B cell (primary cell): ENCODE measurements at regions of chr6 and their contacts with region 1.

Region 1: GRCh38 chr6:143450453-143451371 is at the starts of genes ADAT2 and PEX3:
- DNase-seq: peak; percentile 96
- ATAC-seq: peak; percentile 95
- H3K4me3 ChIP-seq: peak within 1 kb of the TSS; percentile 69 to 95 (median 87)
- H3K4me3 Mint-ChIP-seq: peak within 1 kb of the TSS; percentile 95
- H3K27ac ChIP-seq: peak within 1 kb of the TSS; percentile 59 to 82
- H3K27ac Mint-ChIP-seq: peak within 1 kb of the TSS; percentile 94
- H3K4me1 ChIP-seq: peaks cover 15 to 18% of the 10 kb centered on the region in 2 donors
- H3K4me1 Mint-ChIP-seq: peaks cover 33% of the 10 kb centered on the region
- H3K27me3 ChIP-seq: no peaks in the 10 kb centered on the region
- H3K27me3 Mint-ChIP-seq: no peaks in the 10 kb centered on the region
- CTCF ChIP-seq: no peak
- total RNA-seq, gene ADAT2: 15.2 and 16.0 TPM in 2 replicates
- total RNA-seq, gene PEX3: 23.2 and 31.1 TPM in 2 replicates

Region 2: GRCh38 chr6:142850679-142851423 is 599.9 kb before region 1 on chr6:
- CTCF ChIA-PET with region 1: no interaction called
- POLR2A ChIA-PET with region 1: no interaction called
- intact Hi-C with region 1: loop called (anchors 10 kb)
- DNase-seq: no peak
- ATAC-seq: no peak
- H3K4me3 ChIP-seq: no peak overlapping the region
- H3K4me3 Mint-ChIP-seq: peak overlapping the region; percentile 39
- H3K27ac ChIP-seq: no peak overlapping the region
- H3K27ac Mint-ChIP-seq: peak overlapping the region; percentile 38
- H3K4me1 ChIP-seq: peaks cover 70 to 81% of the 10 kb centered on the region in 2 donors
- H3K4me1 Mint-ChIP-seq: peaks cover 91% of the 10 kb centered on the region
- H3K27me3 ChIP-seq: no peaks in the 10 kb centered on the region
- H3K27me3 Mint-ChIP-seq: no peaks in the 10 kb centered on the region
- CTCF ChIP-seq: no peak

Region 3: GRCh38 chr6:143465546-143465945 is 14.8 kb after region 1 on chr6:
- CTCF ChIA-PET with region 1: no interaction called
- POLR2A ChIA-PET with region 1: no interaction called
- intact Hi-C with region 1: no loop called
- DNase-seq: no peak
- ATAC-seq: no peak
- H3K4me3 ChIP-seq: no peak overlapping the region
- H3K4me3 Mint-ChIP-seq: no peak overlapping the region
- H3K27ac ChIP-seq: no peak overlapping the region
- H3K27ac Mint-ChIP-seq: no peak overlapping the region
- H3K4me1 ChIP-seq: no peaks in the 10 kb centered on the region
- H3K4me1 Mint-ChIP-seq: no peaks in the 10 kb centered on the region
- H3K27me3 ChIP-seq: no peaks in the 10 kb centered on the region
- H3K27me3 Mint-ChIP-seq: no peaks in the 10 kb centered on the region
- CTCF ChIP-seq: no peak

Region 4: DNA sequence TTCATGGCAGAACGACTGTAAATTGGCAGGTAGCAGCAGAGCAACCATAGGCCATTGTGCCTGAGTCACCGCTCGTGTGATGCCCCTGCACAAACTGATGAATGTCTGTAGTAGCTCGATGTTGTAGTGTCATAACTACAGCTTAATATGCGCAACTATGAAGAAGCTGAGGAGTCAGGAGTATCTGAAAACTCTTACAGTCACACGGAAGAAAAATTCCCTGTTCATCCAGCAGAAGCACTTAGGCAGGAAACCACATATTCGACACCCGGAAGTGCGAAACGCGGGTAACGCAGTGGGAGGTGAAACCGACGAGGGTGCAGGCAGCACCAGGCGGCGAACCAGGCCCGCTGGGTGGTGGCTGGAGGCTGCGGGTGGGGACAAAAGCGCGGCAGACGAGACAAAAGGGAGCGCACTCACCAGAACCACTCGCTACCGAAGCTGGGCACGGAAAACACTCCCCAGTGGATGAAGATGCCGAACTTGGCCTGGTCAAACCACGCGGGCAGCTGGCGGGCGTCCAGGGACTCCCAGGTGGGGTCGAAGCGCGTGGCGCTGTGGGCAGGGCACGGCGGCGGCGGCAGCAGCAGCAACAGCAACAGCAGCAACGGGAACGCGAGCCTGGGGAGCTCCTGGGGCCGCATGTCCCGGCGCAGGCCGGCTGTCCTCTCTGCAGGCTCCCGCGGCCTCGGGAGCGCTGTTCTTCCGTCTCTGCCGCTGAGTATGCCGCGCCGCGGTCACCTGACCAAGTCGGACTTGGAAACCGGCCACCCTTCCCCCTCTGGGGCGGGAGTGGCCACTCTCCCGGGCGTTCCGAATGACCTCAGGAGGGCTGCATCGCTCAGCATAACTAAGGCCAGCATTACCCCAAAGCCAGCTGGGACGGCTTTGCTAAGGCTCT is 60.5 kb after region 1 on chr6 and contains the start of gene FUCA2:
- CTCF ChIA-PET with region 1: interaction called, 4 read pairs
- POLR2A ChIA-PET with region 1: interaction called, 4 read pairs
- intact Hi-C with region 1: loop called (anchors 1 kb)
- DNase-seq: peak; percentile 69
- ATAC-seq: peak; percentile 65
- H3K4me3 ChIP-seq: peak within 1 kb of the TSS; percentile 46 to 74 (median 64)
- H3K4me3 Mint-ChIP-seq: peak within 1 kb of the TSS; percentile 98
- H3K27ac ChIP-seq: peak within 1 kb of the TSS; percentile 47 to 72
- H3K27ac Mint-ChIP-seq: peak within 1 kb of the TSS; percentile 95
- H3K4me1 ChIP-seq: peaks cover 15 to 19% of the 10 kb centered on the region in 2 donors
- H3K4me1 Mint-ChIP-seq: peaks cover 33% of the 10 kb centered on the region
- H3K27me3 ChIP-seq: no peaks in the 10 kb centered on the region
- H3K27me3 Mint-ChIP-seq: no peaks in the 10 kb centered on the region
- CTCF ChIP-seq: no peak
- total RNA-seq, gene FUCA2: 8.3 and 8.8 TPM in 2 replicates

Region 5: GRCh38 chr6:144063744-144064401 is 613.2 kb after region 1 on chr6:
- CTCF ChIA-PET with region 1: no interaction called
- POLR2A ChIA-PET with region 1: no interaction called
- intact Hi-C with region 1: loop called (anchors 1 kb)
- DNase-seq: peak; percentile 97
- ATAC-seq: peak; percentile 91
- H3K4me3 ChIP-seq: peak overlapping the region; percentile 74 to 86 (median 82)
- H3K4me3 Mint-ChIP-seq: peak overlapping the region; percentile 90
- H3K27ac ChIP-seq: peak overlapping the region; percentile 88 to 96
- H3K27ac Mint-ChIP-seq: peak overlapping the region; percentile 92
- H3K4me1 ChIP-seq: peaks cover 21 to 32% of the 10 kb centered on the region in 2 donors
- H3K4me1 Mint-ChIP-seq: peaks cover 37% of the 10 kb centered on the region
- H3K27me3 ChIP-seq: no peaks in the 10 kb centered on the region
- H3K27me3 Mint-ChIP-seq: no peaks in the 10 kb centered on the region
- CTCF ChIP-seq: peak; percentile 14

Region 6: DNA sequence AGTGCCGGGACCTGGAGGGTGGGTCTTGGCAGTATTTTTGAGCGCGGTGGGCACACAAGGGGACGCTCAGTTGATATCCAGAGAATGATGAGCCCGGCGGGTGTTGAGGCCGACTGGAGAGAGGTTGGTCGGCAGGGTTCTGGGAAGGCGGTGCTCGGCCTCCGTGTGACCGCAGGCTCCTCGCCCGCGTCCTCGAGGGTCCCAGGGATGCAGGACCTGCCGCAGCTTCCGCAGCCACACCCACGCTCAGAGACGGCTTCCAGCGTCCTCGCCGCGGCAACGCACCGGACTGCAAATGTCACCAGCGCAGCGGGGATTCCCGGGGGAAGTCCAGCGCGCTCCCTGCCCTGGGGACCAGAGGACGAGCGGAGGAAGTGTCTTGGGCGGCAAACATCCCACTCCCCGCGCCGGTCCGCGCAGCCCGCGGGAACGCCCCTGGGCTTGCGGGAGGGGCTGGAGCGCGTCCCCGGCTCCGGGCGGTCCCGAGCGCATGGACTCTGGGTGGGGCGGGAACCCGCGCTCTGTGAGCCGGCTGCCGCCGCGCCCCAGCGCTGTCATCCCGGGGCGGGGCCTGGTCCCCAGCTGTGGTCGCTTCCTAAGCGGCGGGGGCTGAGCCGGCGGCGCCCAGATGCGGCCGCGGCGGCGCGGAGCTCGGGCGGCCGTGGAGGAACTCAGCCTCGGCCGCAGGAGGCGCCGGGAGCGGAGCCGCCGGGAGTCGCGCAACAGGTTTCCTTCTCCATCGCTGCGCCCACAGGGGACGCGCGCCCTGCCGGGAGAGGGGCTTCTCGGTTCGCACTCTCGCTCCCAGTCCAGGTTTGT is 699.4 kb after region 1 on chr6 and contains the start of gene STX11:
- CTCF ChIA-PET with region 1: no interaction called
- POLR2A ChIA-PET with region 1: no interaction called
- intact Hi-C with region 1: loop called (anchors 2 kb)
- DNase-seq: peak; percentile 85
- ATAC-seq: peak; percentile 75
- H3K4me3 ChIP-seq: peak within 1 kb of the TSS; percentile 54 to 96 (median 76)
- H3K4me3 Mint-ChIP-seq: peak within 1 kb of the TSS; percentile 96
- H3K27ac ChIP-seq: peak within 1 kb of the TSS; percentile 61 to 78
- H3K27ac Mint-ChIP-seq: peak within 1 kb of the TSS; percentile 97
- H3K4me1 ChIP-seq: peaks cover 9 to 15% of the 10 kb centered on the region in 2 donors
- H3K4me1 Mint-ChIP-seq: peaks cover 42% of the 10 kb centered on the region
- H3K27me3 ChIP-seq: no peaks in the 10 kb centered on the region
- H3K27me3 Mint-ChIP-seq: no peaks in the 10 kb centered on the region
- CTCF ChIP-seq: no peak
- total RNA-seq, gene STX11: 10.3 and 11.6 TPM in 2 replicates